ENCODE measurements at regions of chr6 and their contacts with region 1.

Region 1: GRCh38 chr6:131532580-131533039 is 40.4 kb upstream of the ARG1 start:
- DNase-seq: peak; percentile 31
- CTCF ChIP-seq: no peak

Region 2: GRCh38 chr6:131199568-131200272 is 332.9 kb before region 1 on chr6:
- CTCF ChIA-PET with region 1: interaction called, 26 read pairs
- POLR2A ChIA-PET with region 1: no interaction called
- DNase-seq: peak; percentile 70
- CTCF ChIP-seq: peak; percentile 77

Region 3: DNA sequence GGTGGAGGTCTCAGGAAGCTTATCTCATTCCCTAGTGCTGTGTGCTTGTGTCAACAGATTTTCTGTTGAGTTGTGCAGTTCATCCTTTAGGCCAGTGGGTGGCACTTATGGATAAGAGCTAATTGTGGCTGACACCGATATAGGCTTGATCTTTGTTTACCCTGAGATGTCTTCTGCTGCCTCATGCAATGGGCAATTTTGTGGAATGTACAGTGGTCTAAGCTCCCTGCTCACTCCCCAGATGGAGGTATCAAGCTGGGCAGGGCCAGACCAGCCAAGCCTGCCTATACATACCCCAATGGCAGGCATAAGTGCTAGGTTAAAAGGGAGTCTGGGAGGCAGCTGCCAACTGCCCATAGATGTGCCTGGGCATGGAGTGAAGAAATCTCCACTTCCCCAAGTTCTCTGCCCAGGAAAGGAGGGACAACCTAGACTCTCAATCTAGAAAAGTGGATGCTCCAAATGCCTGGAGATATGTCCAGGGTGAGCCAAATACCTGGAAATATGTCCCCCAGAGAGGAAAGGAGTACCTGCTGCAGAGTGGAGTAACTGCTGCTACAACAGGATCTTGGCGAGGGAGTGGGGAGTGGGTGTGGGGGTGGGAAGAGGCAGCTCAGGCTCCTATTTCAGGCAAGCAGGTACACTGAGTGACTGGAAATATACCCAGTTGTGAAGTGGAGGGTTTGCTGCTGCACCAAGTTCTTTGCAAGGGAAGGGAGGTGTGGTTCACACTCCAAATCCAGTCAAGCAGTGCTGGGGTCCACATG is 12.8 kb before region 1 on chr6:
- CTCF ChIA-PET with region 1: interaction called, 42 read pairs
- POLR2A ChIA-PET with region 1: no interaction called
- DNase-seq: peak; percentile 29
- CTCF ChIP-seq: peak; percentile 68

Region 4: DNA sequence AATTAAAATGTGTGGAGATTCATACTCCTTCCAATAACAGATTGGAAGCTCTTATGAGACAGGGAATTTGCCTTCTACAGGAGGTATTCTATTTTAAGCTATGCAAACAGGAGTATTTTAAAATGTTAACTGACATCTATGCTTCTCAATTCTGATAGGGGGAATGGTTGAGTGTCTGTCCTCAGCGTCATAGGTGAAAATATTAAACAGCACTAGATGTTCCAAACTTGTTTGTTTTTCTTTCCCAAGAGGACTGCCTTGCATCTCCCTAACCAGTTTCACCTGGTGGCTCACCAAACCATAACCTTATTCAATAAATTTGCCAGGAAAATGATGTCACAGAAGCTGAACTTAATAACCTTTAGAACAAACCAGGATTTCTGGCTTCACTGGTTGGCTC is 15.8 kb after region 1 on chr6:
- CTCF ChIA-PET with region 1: interaction called, 13 read pairs
- POLR2A ChIA-PET with region 1: no interaction called
- DNase-seq: no peak
- CTCF ChIP-seq: no peak

Region 5: DNA sequence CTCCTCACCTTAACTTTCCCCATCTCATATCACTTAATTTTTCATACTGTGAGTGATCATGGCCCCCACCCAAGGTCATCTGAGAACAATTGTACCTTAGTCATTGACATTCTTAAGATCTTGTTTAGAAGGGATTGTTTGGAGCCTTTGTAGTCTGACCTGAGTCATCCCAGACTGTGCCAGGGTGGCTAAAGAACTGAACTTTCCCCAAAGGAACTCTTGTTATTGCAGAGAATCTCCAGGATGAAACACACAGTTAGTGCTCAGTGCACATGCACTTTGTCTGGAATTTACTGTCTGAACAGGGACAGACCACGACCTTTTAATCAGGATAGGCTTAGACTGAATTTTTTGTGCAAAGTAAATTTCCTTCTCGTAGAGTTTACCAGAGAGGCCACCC is 531.1 kb after region 1 on chr6:
- CTCF ChIA-PET with region 1: no interaction called
- POLR2A ChIA-PET with region 1: no interaction called
- DNase-seq: no peak
- CTCF ChIP-seq: no peak